Activated T-helper 1 cell treated with anti-CD3 and anti-CD28 coated beads, Interleukin-12 subunit alpha, Interleukin-12 subunit beta, Interleukin-2, Interleukin-4 antibody, amounts not matched to agents 30 ng/mL and 10 ng/mL and 1 ng/mL, durations not matched to agents 14 hours and 24 hours and 36 hours (primary cell): ENCODE measurements at regions of chr5 and their contacts with region 1.

Region 1: GRCh38 chr5:169637085-169637548 is at the start of gene DOCK2:
- DNase-seq: peak; percentile 68
- H3K4me3 Mint-ChIP-seq: peak within 1 kb of the TSS; percentile 86
- H3K27ac Mint-ChIP-seq: peak within 1 kb of the TSS; percentile 92
- H3K4me1 Mint-ChIP-seq: peaks cover 57% of the 10 kb centered on the region
- H3K27me3 Mint-ChIP-seq: no peaks in the 10 kb centered on the region
- total RNA-seq, gene DOCK2: 214 and 216 TPM in 2 replicates

Region 2: DNA sequence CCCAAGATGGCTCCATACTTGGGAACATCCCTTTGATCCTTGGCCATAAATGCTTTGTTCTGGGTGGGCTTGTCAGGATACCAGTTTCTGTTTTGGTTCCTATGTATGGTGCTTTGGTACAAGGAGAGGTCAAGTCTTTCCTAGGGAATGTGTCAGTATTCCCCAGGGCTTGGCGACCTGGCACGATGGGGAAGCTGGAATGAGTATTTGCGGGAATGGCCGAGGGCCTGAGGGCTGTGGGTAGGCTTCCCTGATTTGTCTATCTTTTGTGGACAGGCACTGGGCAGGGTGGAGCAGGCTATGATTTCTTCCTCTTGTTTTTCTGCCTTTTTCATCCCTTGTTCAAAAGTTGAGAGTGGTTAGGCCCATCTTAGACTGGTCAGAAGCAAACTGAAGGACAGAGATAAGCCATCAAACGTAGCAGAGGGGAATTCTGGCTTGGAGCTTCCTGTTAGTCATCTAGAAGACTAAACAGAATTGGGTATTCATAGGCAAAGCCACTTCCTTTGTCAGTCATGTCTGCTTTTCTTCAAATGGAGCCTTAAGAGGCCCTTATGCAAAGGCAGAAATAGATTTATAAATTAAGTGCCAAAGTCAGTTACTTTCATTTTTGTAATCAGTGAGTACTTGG is 13.7 kb after region 1 on chr5:
- intact Hi-C with region 1: loop called (anchors 1 kb)
- DNase-seq: peak; percentile 37
- H3K4me3 Mint-ChIP-seq: peak overlapping the region; percentile 72
- H3K27ac Mint-ChIP-seq: peak overlapping the region; percentile 99
- H3K4me1 Mint-ChIP-seq: peaks cover 99% of the 10 kb centered on the region
- H3K27me3 Mint-ChIP-seq: no peaks in the 10 kb centered on the region

Region 3: GRCh38 chr5:169656125-169656901 is 19.2 kb after region 1 on chr5:
- intact Hi-C with region 1: loop called (anchors 2 kb)
- DNase-seq: peak; percentile 35
- H3K4me3 Mint-ChIP-seq: peak overlapping the region; percentile 45
- H3K27ac Mint-ChIP-seq: peak overlapping the region; percentile 87
- H3K4me1 Mint-ChIP-seq: peaks cover 83% of the 10 kb centered on the region
- H3K27me3 Mint-ChIP-seq: no peaks in the 10 kb centered on the region